Activated CD8-positive, alpha-beta T cell treated with anti-CD3 and anti-CD28 coated beads for 36 hours (primary cell): ENCODE measurements at regions of chr4 and their contacts with region 1.

Region 1: DNA sequence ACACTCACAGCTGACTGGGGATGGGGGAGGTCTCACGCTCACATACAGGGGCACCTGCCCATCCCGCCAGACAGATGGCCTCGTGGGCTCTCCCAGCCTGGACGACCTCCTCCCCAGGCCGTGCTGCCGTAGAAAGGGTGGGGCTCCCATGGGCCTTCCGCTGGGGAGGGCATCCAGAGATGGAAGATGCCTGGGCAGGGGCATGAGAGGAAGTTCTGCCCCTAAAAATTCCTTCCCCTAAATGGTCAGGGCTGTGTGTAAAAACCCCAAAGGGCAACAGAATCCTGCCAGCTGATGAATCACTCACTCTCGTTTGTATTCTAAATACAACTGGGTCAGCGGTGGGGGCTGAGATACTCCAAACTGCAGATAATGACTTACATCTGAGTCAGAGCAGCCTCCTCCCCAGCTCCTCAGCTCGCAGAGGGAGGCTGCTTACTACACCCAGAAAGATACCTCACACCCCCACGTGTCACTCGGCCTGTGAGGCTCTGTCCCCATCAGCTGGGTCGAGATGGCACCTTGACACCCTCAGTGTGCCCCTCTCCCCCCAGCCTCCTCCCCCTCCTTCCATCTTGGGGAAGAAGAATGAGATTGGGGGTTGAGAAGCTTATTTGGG is 10.1 kb downstream of the WDR1 start:
- DNase-seq: peak; percentile 95
- ATAC-seq: peak; percentile 89
- H3K4me3 Mint-ChIP-seq: peak overlapping the region; percentile 71
- H3K27ac Mint-ChIP-seq: peak overlapping the region; percentile 90
- H3K4me1 Mint-ChIP-seq: peaks cover 98% of the 10 kb centered on the region
- H3K27me3 Mint-ChIP-seq: no peaks in the 10 kb centered on the region
- CTCF ChIP-seq: no peak

Region 2: DNA sequence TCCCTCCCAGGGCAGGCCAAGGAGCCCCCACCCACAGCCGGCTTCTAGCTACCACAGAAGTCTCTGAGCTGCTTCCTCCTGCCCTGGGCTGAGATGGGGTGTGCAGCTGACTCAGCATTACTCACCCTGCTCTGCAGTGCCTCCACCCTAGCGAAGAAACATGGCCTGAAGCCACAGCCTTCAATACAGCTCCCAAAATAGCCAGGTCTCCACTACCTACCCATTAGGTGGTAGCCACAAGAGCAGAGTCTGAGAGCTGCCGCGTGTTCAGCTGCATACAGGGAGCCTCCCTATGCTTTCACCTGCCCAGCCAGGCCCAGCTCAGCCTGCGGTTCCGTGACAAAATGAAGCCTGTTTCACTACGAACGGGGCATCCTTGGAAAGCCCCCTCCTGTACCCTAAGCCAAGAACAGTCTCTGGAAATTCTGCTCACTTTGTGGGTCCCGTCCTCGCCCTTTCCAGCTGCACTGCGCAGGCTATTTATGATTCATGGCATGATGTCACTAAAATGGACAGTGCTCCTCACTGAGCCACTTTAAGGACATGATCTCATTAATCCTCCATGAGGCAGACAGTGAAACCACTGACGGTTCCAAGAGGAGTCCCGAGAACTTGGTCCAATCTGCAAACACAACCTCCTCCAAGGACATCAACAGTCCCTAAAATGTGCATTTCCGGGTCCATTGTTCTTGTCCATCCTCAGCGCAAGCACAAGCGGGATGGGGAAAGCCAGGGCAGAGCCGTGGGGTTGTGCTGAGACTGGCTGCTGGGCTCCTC is 10.1 kb before region 1 on chr4:
- CTCF ChIA-PET with region 1: interaction called, 10 read pairs
- POLR2A ChIA-PET with region 1: interaction called, 403 read pairs
- intact Hi-C with region 1: no loop called
- DNase-seq: peak; percentile 95
- ATAC-seq: peak; percentile 78
- H3K4me3 Mint-ChIP-seq: peak overlapping the region; percentile 28
- H3K27ac Mint-ChIP-seq: peak overlapping the region; percentile 98
- H3K4me1 Mint-ChIP-seq: peaks cover 99% of the 10 kb centered on the region
- H3K27me3 Mint-ChIP-seq: no peaks in the 10 kb centered on the region
- CTCF ChIP-seq: no peak